ENCODE measurements at regions of chr9 and their contacts with region 1.

Region 1: DNA sequence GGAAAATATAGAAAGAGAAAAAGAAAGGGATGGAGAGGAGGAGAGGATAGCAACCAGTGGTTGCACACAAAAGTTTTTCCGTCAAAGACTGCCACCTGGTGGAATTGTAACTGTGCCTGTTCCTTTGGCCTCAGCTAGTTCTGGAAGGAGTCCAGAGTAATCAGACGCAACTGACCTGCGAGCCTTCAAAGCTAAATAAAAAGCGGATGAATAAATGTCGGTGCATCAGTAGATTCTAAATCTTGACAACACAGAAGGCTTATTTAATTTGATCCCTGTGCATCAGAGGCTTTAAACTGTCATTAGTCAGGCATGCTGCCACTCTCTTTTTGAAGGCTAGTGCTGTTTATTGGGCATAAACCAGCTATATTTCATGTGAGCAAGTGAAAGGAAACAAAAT is 132.9 kb upstream of the ACO1 start:
- DNase-seq: peak; percentile 51
- H3K4me3 ChIP-seq: no peak overlapping the region
- H3K27ac ChIP-seq: no peak overlapping the region
- H3K4me1 ChIP-seq: no peaks in the 10 kb centered on the region
- H3K27me3 ChIP-seq: no peaks in the 10 kb centered on the region
- CTCF ChIP-seq: peak; percentile 73 to 82

Region 2: DNA sequence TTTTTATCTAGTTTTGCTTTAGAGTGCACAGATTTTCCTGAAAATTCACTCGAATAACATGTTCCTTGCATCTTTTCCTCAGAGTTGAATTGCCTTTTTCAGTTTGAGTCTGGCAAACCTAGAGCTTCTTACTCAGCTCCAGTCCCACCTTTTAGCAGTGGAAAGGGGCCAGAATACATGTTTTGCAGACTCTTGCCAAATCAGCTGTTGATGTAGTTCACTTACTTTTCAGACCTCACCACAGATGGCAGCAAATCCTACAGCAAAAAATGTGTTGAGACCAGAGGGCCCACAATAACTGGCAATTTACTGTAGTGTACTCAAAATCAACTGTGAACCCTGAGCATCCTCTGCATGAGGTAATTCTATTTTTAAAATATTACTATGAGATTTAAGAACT is 412.3 kb before region 1 on chr9:
- CTCF ChIA-PET with region 1: interaction called, 4 read pairs
- dilution Hi-C with region 1: no loop called
- in situ Hi-C with region 1: no loop called
- intact Hi-C with region 1: loop called (anchors 2 kb)
- DNase-seq: no peak
- H3K4me3 ChIP-seq: no peak overlapping the region
- H3K27ac ChIP-seq: no peak overlapping the region
- H3K4me1 ChIP-seq: no peaks in the 10 kb centered on the region
- H3K27me3 ChIP-seq: peaks cover 4% of the 10 kb centered on the region
- CTCF ChIP-seq: peak in 1 of 2 donors; percentile 41

Region 3: DNA sequence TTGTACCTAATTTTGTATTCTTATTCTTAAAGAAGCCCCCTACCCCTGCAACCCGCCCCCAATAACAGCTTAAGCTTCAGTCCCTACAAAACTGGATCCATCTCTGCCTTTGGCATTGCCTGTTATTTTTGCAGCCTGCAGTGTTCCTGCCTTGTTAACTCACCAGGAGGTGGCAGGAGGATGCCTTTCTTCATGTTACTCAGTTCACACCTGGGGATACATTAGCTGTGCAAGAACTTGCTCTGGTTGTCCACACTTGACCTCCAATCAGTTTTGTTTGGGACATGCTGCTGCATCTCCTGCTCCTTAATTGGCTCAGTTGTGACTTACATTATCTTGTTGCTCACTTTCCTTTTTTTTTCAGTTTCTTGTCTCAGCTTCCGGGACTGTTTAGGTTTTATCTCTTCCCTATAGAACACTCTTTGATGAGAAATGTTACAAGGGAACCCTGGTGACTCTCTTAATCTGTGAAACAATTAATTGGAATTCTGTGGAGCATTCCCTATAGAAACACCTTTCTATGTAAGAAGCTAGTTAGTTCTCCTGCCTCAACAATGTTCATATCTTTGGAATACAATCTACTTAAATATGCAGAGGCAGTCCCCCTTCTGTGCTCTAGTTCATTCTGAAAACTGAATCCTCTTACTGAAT is 334.8 kb before region 1 on chr9:
- CTCF ChIA-PET with region 1: no interaction called
- dilution Hi-C with region 1: no loop called
- in situ Hi-C with region 1: no loop called
- intact Hi-C with region 1: loop called (anchors 1 kb)
- DNase-seq: no peak
- H3K4me3 ChIP-seq: no peak overlapping the region
- H3K27ac ChIP-seq: no peak overlapping the region
- H3K4me1 ChIP-seq: no peaks in the 10 kb centered on the region
- H3K27me3 ChIP-seq: peaks cover 3% of the 10 kb centered on the region
- CTCF ChIP-seq: peak in 1 of 2 donors; percentile 64

Region 4: DNA sequence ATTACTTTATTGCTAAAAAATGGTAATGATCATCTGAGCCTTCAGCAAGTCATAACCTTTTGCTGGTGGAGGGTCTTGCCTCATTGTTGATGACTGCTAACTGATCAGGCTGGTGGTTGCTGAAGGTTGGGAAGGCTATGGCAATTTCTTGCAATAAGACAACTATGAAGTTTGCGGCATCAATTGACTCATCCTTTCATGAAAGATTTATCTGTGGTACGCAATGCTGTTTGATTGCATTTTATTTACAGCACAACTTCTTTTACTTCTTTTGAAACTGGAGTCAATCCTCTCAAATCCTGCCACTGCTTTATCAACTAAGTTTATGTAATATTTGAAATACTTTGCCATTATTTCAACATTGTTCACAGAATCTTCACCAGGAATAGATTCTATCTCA is 74.6 kb after region 1 on chr9:
- CTCF ChIA-PET with region 1: no interaction called
- dilution Hi-C with region 1: no loop called
- in situ Hi-C with region 1: no loop called
- intact Hi-C with region 1: no loop called
- DNase-seq: no peak
- H3K4me3 ChIP-seq: no peak overlapping the region
- H3K27ac ChIP-seq: no peak overlapping the region
- H3K4me1 ChIP-seq: no peaks in the 10 kb centered on the region
- H3K27me3 ChIP-seq: no peaks in the 10 kb centered on the region
- CTCF ChIP-seq: no peak

Region 5: GRCh38 chr9:32533336-32533735 is 281.8 kb after region 1 on chr9:
- CTCF ChIA-PET with region 1: no interaction called
- dilution Hi-C with region 1: no loop called
- in situ Hi-C with region 1: no loop called
- intact Hi-C with region 1: no loop called
- DNase-seq: no peak
- H3K4me3 ChIP-seq: no peak overlapping the region
- H3K27ac ChIP-seq: no peak overlapping the region
- H3K4me1 ChIP-seq: peaks cover 9% of the 10 kb centered on the region
- H3K27me3 ChIP-seq: no peaks in the 10 kb centered on the region
- CTCF ChIP-seq: no peak